Activated CD8-positive, alpha-beta T cell treated with anti-CD3 and anti-CD28 coated beads for 36 hours (primary cell): ENCODE measurements at regions of chr2 and their contacts with region 1.

Region 1: GRCh38 chr2:10434886-10435819 is 13.0 kb downstream of the ODC1 start:
- DNase-seq: peak; percentile 81
- ATAC-seq: peak; percentile 77
- H3K4me3 Mint-ChIP-seq: no peak overlapping the region
- H3K27ac Mint-ChIP-seq: no peak overlapping the region
- H3K4me1 Mint-ChIP-seq: peaks cover 11% of the 10 kb centered on the region
- H3K27me3 Mint-ChIP-seq: peaks cover 9% of the 10 kb centered on the region
- CTCF ChIP-seq: peak; percentile 88

Region 2: DNA sequence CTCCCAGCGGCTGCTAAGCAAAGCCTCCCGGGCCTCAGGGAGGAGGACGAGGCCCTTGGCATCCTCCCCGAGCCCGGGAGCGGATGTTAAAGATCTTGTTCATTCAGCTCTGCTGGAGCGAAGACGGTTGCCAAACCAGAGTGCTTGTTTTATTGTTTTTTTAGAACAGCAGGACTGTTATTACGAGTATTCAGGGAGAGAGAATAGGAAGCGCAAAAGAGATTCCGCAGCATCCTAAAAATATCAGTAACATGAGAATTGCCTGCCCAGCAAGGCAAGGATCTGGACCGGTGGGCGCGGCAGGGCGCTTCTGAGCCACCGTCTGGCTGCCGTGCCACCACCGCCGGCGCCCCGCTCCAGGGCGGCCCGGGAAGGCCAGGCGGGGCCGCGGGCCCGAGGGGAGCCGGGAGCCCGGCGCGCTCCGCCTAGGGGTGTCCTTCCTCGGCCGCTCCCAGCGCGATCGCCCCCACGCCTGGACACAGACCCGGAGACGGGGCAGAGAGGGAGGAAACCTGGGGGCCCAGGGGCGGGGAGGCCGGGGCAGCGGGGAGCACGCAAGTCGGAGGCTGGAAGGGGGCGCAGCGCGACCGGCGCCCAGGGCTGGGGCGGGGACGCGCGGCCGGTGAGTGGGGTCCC is 355.8 kb before region 1 on chr2:
- CTCF ChIA-PET with region 1: interaction called, 131 read pairs
- POLR2A ChIA-PET with region 1: no interaction called
- intact Hi-C with region 1: no loop called
- DNase-seq: peak; percentile 26
- ATAC-seq: peak; percentile 26
- H3K4me3 Mint-ChIP-seq: peak overlapping the region; percentile 66
- H3K27ac Mint-ChIP-seq: no peak overlapping the region
- H3K4me1 Mint-ChIP-seq: peaks cover 24% of the 10 kb centered on the region
- H3K27me3 Mint-ChIP-seq: peaks cover 67% of the 10 kb centered on the region
- CTCF ChIP-seq: no peak

Region 3: GRCh38 chr2:10129490-10129889 is 305.7 kb before region 1 on chr2:
- CTCF ChIA-PET with region 1: interaction called, 46 read pairs
- POLR2A ChIA-PET with region 1: interaction called, 11 read pairs
- intact Hi-C with region 1: no loop called
- DNase-seq: no peak
- ATAC-seq: no peak
- H3K4me3 Mint-ChIP-seq: no peak overlapping the region
- H3K27ac Mint-ChIP-seq: no peak overlapping the region
- H3K4me1 Mint-ChIP-seq: peaks cover 49% of the 10 kb centered on the region
- H3K27me3 Mint-ChIP-seq: no peaks in the 10 kb centered on the region
- CTCF ChIP-seq: no peak

Region 4: DNA sequence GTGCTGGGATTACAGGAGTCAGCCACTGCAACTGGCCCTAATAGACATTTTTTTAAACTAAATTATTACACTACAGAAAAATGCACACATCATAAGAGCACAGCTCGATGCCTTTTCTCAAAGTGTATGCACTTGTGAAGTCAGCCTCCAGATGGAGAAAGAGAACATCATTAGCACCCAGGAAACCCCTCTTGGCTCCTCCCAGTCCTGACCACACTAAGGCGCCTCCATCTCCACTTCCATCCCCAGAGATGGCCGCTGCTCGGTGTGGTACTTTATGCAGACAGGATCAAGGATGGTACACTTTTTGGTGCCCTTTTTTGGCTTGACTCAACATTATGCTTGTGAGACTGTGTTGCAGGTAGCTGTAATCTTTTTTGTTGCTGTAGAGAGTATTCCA is 277.9 kb before region 1 on chr2:
- CTCF ChIA-PET with region 1: interaction called, 14 read pairs
- POLR2A ChIA-PET with region 1: no interaction called
- intact Hi-C with region 1: no loop called
- DNase-seq: no peak
- ATAC-seq: no peak
- H3K4me3 Mint-ChIP-seq: no peak overlapping the region
- H3K27ac Mint-ChIP-seq: no peak overlapping the region
- H3K4me1 Mint-ChIP-seq: no peaks in the 10 kb centered on the region
- H3K27me3 Mint-ChIP-seq: no peaks in the 10 kb centered on the region
- CTCF ChIP-seq: no peak

Region 5: GRCh38 chr2:10302479-10303180 is 132.5 kb before region 1 on chr2 and contains the start of gene HPCAL1:
- CTCF ChIA-PET with region 1: interaction called, 13 read pairs
- POLR2A ChIA-PET with region 1: interaction called, 3 read pairs
- intact Hi-C with region 1: no loop called
- DNase-seq: peak; percentile 89
- ATAC-seq: peak; percentile 81
- H3K4me3 Mint-ChIP-seq: peak within 1 kb of the TSS; percentile 96
- H3K27ac Mint-ChIP-seq: peak within 1 kb of the TSS; percentile 89
- H3K4me1 Mint-ChIP-seq: peaks cover 68% of the 10 kb centered on the region
- H3K27me3 Mint-ChIP-seq: no peaks in the 10 kb centered on the region
- CTCF ChIP-seq: peak; percentile 73
- total RNA-seq, gene HPCAL1: 166 to 170 TPM

Region 6: GRCh38 chr2:10417551-10418335 is 17.4 kb before region 1 on chr2:
- CTCF ChIA-PET with region 1: interaction called, 10 read pairs
- POLR2A ChIA-PET with region 1: interaction called, 3 read pairs
- intact Hi-C with region 1: no loop called
- DNase-seq: no peak
- ATAC-seq: peak; percentile 57
- H3K4me3 Mint-ChIP-seq: no peak overlapping the region
- H3K27ac Mint-ChIP-seq: no peak overlapping the region
- H3K4me1 Mint-ChIP-seq: peaks cover 20% of the 10 kb centered on the region
- H3K27me3 Mint-ChIP-seq: no peaks in the 10 kb centered on the region
- CTCF ChIP-seq: no peak

Region 7: DNA sequence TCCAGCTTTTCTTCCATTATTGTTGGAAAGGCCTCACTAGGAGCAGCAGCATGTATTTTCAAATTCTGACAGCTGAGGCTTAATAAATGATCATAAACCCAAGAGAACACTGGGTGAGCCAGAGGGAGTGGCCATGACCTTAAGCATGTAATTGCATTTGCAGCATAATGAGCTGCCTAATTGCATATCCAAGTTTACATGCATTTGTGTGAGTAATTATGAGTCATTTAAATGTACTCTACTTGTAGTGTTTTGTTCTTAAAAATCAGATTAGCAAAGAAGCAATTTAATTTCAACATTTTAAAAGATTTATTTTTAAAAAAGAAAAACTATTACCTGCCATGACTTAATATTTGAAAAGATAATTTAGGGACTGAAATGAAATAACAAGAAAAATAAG is 179.8 kb after region 1 on chr2:
- CTCF ChIA-PET with region 1: no interaction called
- POLR2A ChIA-PET with region 1: no interaction called
- intact Hi-C with region 1: no loop called
- DNase-seq: no peak
- ATAC-seq: no peak
- H3K4me3 Mint-ChIP-seq: no peak overlapping the region
- H3K27ac Mint-ChIP-seq: no peak overlapping the region
- H3K4me1 Mint-ChIP-seq: peaks cover 5% of the 10 kb centered on the region
- H3K27me3 Mint-ChIP-seq: no peaks in the 10 kb centered on the region
- CTCF ChIP-seq: no peak